ENCODE measurements at regions of chr11 and their contacts with region 1.

Region 1: GRCh38 chr11:16820324-16821092 is 82.1 kb downstream of the C11orf58 start:
- DNase-seq: peak; percentile 76
- ATAC-seq: no peak
- H3K4me3 Mint-ChIP-seq: no peak overlapping the region
- H3K27ac Mint-ChIP-seq: no peak overlapping the region
- H3K4me1 Mint-ChIP-seq: no peaks in the 10 kb centered on the region
- H3K27me3 Mint-ChIP-seq: peaks cover 9% of the 10 kb centered on the region

Region 2: GRCh38 chr11:16785520-16786128 is 34.9 kb before region 1 on chr11:
- CTCF ChIA-PET with region 1: interaction called, 12 read pairs
- POLR2A ChIA-PET with region 1: no interaction called
- DNase-seq: peak; percentile 64
- ATAC-seq: peak; percentile 83
- H3K4me3 Mint-ChIP-seq: no peak overlapping the region
- H3K27ac Mint-ChIP-seq: no peak overlapping the region
- H3K4me1 Mint-ChIP-seq: no peaks in the 10 kb centered on the region
- H3K27me3 Mint-ChIP-seq: no peaks in the 10 kb centered on the region

Region 3: DNA sequence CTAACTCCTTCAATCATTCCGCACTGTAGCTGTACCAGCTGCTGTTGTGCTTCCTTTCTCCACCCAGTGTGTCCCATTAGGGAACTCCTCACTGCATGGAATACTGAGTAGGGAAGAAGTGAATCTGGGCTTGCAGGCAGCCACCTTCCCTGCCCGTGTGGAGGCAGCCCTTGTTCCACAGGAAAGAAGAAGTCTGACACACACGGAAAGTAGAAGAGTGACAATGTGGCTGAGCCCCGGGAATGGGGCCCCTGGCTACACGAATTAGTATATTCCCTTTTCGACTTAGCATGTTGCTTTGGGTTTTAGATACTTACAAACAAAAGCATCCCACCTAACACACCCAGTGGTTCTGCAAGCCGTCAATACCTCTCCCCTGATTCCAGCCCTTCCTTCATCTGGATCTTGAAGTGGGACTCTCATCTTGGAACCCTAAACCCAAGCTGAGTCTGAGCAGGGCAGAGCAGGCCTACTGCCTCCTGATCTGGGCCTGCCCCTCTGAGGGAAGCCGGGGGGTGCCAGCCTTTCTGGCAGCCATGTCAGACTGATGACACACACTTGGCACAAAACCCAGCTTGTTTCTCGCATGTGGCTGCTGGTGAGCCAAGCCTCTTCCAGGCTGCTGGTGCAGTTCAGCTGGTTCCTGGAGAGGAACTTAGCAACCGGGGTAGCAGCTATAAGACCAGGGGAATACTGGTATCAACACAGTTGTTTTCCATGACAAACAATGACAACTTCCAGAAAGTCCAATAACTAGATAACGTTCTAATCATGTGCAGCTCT is 10.4 kb before region 1 on chr11:
- CTCF ChIA-PET with region 1: interaction called, 23 read pairs
- POLR2A ChIA-PET with region 1: no interaction called
- DNase-seq: no peak
- ATAC-seq: no peak
- H3K4me3 Mint-ChIP-seq: no peak overlapping the region
- H3K27ac Mint-ChIP-seq: no peak overlapping the region
- H3K4me1 Mint-ChIP-seq: peaks cover 3% of the 10 kb centered on the region
- H3K27me3 Mint-ChIP-seq: peaks cover 2% of the 10 kb centered on the region

Region 4: GRCh38 chr11:16831316-16832192 is 11.0 kb after region 1 on chr11:
- CTCF ChIA-PET with region 1: interaction called, 34 read pairs
- POLR2A ChIA-PET with region 1: no interaction called
- DNase-seq: no peak
- ATAC-seq: no peak
- H3K4me3 Mint-ChIP-seq: no peak overlapping the region
- H3K27ac Mint-ChIP-seq: no peak overlapping the region
- H3K4me1 Mint-ChIP-seq: no peaks in the 10 kb centered on the region
- H3K27me3 Mint-ChIP-seq: peaks cover 3% of the 10 kb centered on the region

Region 5: GRCh38 chr11:16902781-16903378 is 82.4 kb after region 1 on chr11:
- CTCF ChIA-PET with region 1: interaction called, 17 read pairs
- POLR2A ChIA-PET with region 1: no interaction called
- DNase-seq: no peak
- ATAC-seq: no peak
- H3K4me3 Mint-ChIP-seq: no peak overlapping the region
- H3K27ac Mint-ChIP-seq: no peak overlapping the region
- H3K4me1 Mint-ChIP-seq: peaks cover 23% of the 10 kb centered on the region
- H3K27me3 Mint-ChIP-seq: no peaks in the 10 kb centered on the region

Region 6: GRCh38 chr11:16935518-16936302 is 115.2 kb after region 1 on chr11:
- CTCF ChIA-PET with region 1: interaction called, 15 read pairs
- POLR2A ChIA-PET with region 1: no interaction called
- DNase-seq: peak; percentile 46
- ATAC-seq: peak; percentile 51
- H3K4me3 Mint-ChIP-seq: no peak overlapping the region
- H3K27ac Mint-ChIP-seq: no peak overlapping the region
- H3K4me1 Mint-ChIP-seq: no peaks in the 10 kb centered on the region
- H3K27me3 Mint-ChIP-seq: peaks cover 15% of the 10 kb centered on the region

Region 7: GRCh38 chr11:17063171-17064002 is 242.9 kb after region 1 on chr11:
- CTCF ChIA-PET with region 1: interaction called, 12 read pairs
- POLR2A ChIA-PET with region 1: no interaction called
- DNase-seq: peak; percentile 55
- ATAC-seq: peak; percentile 84
- H3K4me3 Mint-ChIP-seq: no peak overlapping the region
- H3K27ac Mint-ChIP-seq: no peak overlapping the region
- H3K4me1 Mint-ChIP-seq: no peaks in the 10 kb centered on the region
- H3K27me3 Mint-ChIP-seq: peaks cover 3% of the 10 kb centered on the region

Measured in activated CD8-positive, alpha-beta T cell treated with anti-CD3 and anti-CD28 coated beads, Interleukin-2, amount 10 ng/mL, durations not matched to agents 7 days and 5 days (primary cell).